ENCODE measurements at regions of chr12 and their contacts with region 1.

Region 1: GRCh38 chr12:14664510-14664909 is 31.9 kb downstream of the GUCY2C start:
- DNase-seq: no peak

Region 2: DNA sequence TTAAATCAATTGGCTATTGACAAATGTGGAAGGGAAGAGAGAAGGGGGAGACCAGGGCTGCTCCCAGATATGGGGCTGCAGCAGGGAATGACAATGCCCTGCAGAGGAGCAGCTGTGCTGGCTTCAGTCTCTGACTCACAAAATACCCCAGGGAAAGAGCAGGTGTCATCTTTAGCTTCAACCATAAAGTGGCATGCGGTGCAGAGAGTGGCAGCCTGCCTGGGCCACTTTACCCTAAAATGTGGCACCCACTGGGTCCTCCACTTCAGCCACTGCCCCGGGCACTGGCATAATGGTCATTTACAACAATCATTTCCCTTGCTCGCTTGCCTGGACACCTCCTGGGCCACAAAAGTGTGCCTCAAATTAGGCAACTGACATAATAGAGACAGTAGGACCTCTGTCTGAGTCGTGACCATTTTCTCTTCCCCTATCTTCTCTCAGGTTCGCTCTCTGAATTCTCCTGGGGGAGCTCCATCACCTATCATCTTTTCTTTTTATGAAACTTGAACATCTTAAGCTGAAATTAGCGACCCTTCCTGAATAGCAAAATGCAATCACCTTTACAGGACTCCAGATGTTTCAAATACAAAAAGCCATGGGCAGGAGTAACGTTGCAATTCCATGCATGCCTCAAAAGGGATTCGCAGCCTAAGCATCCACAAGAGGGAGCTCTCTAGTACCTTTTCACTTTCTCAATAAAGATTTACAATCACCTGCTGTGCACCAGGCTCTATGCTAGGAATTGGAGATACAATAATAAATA is 478.9 kb before region 1 on chr12:
- intact Hi-C with region 1: loop called (anchors 2 kb)
- DNase-seq: peak in 2 of 10 donors; percentile 14 to 15

Region 3: DNA sequence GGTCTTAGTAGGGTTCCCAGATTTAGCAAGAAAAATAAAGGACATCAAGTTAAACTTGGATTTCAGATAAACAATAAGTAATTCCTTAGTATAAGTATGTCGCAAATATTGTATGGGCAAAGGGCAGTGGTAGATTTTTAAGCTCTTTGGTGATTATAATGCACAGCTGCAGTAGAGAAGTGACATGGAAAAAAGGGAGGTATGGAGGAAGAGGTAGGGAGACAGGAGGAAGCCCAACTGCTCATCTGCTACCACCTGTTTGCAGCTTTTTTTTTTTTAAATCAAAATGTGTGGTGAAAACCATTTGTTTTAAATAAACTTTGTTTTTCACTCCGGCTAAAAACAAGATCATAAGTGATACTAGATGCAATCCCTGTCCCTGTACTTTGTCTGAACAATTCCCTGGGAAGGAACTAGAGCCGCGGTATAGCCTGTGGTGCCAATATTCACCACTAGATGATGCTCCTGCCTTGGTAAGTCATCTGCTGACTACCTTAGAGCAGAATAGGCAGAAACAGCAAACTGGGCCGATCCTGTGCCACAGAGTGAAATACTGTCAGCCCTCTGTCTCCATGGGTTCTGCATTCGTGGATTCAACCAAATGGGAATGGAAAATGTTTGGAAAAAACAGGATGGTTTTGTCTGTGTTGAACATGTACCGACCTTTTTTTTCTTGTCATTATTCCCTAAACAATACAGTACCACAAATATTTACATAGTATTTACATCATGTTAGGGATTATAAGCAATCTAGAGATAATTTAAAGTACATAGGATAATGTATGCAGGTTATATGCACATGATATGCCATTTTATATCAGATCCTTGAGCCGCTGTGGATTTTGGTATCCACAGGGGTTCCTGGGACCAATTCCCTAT is 34.4 kb before region 1 on chr12:
- intact Hi-C with region 1: loop called (anchors 5 kb)
- DNase-seq: peak in 8 of 10 donors; percentile 55 to 91 (median 68)

Measured in posterior cingulate gyrus (tissue), 11 donors.